CD4-positive, alpha-beta T cell (primary cell): ENCODE measurements at regions of chr10 and their contacts with region 1.

Region 1: GRCh38 chr10:3043512-3044368 is 23.6 kb upstream of the PFKP start:
- DNase-seq: peak in 12 of 14 experiments; percentile 13 to 69 (median 35)
- ATAC-seq: peak; percentile 59
- H3K4me3 ChIP-seq: no peak overlapping the region
- H3K4me3 Mint-ChIP-seq: no peak overlapping the region
- H3K27ac ChIP-seq: no peak overlapping the region
- H3K27ac Mint-ChIP-seq: no peak overlapping the region
- H3K4me1 ChIP-seq: peaks cover 3% of the 10 kb centered on the region
- H3K4me1 Mint-ChIP-seq: no peaks in the 10 kb centered on the region
- H3K27me3 ChIP-seq: peaks cover 2 to 9% of the 10 kb centered on the region in 2 experiments
- H3K27me3 Mint-ChIP-seq: peaks cover 16% of the 10 kb centered on the region
- CTCF ChIP-seq: peak; percentile 59

Region 2: GRCh38 chr10:2839081-2839725 is 204.5 kb before region 1 on chr10:
- CTCF ChIA-PET with region 1: no interaction called
- POLR2A ChIA-PET with region 1: no interaction called
- intact Hi-C with region 1: loop called in 1 of 2 experiments (anchors 5 kb)
- DNase-seq: peak in 5 of 14 experiments; percentile 4 to 30 (median 24)
- ATAC-seq: no peak
- H3K4me3 ChIP-seq: no peak overlapping the region
- H3K4me3 Mint-ChIP-seq: no peak overlapping the region
- H3K27ac ChIP-seq: no peak overlapping the region
- H3K27ac Mint-ChIP-seq: no peak overlapping the region
- H3K4me1 ChIP-seq: no peaks in the 10 kb centered on the region
- H3K4me1 Mint-ChIP-seq: no peaks in the 10 kb centered on the region
- H3K27me3 ChIP-seq: peaks cover 0 to 5% of the 10 kb centered on the region in 2 experiments
- H3K27me3 Mint-ChIP-seq: peaks cover 11% of the 10 kb centered on the region
- CTCF ChIP-seq: peak; percentile 36